ENCODE measurements at regions of chr9 and their contacts with region 1.

Region 1: DNA sequence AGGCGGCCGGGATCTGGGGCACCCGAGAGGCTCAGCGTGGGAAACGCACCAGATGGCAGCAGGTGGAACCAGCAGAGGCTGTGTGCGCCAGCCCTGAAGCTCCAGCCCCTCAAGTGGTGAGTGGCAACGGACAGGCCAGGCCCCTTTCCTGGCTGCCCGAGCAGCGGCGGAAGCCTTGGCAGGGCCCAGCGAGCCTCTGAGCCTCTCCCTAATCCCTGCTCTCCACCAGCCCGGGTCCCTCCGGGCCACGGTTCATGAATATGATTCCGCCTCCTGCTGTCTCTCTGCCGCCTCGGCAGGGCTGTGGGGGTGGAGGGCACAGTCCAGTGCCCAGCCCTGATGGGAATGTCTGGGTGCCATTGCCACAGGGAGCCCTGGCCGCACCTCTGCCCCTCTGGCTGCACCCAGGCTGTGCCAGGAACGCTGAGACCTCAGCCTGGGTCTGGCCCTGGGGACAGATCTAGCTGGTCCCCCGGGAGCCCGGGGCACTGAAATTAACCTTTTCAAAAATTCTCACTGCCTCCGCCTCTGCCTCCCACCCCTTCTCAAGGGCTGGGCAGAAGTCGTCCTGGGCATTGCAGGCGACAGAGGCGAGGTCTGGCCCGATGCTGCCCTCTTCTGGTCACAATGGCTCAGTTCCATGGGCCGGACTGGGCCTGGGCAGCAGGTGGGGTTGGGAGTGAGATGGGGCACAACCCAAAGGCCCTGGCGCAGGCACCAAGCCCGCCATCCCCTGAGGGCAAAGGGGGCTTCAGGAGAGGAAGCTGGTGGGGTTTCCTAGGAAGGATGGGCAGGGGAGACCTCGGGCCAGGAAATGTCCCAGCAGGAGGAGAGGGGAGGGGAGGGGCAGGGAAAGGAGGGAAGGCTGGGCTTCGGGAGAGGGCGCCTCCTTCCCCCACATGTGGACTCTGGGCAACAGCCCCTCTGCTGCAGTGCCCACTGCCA is 20.3 kb downstream of the CCDC187 start:
- DNase-seq: peak; percentile 88
- ATAC-seq: peak; percentile 94

Region 2: DNA sequence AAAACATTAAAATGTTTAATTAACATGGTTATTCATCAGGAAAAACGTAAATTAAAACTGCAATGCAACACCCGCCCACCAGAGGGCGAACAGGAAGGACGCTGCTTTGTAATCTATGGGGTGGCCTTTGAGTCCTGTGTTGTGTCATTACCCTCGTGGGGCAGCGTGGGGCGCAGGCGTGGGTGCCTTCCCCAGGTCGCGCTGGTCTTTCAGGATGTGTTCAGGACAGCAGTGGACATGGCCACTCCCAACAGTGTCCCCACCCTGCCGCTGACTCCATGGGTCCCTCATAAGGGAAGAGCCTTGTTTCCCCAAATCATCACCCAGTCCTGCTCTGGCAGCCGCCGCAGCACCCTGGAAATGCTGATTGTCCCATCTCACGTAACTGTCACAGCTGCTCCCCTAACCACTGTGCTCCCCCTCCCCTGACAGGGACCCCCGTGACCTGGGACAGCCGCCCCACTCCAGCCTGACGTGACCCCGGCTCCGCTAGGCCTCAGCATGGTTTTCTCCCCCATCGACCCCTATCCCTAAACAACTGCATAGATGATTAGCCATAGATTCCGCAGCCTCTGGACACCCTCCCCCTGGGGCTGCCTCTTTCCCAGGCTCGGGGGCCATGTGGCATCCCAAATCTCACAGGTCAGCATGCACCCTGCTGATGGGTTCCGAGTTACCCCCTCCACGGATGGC is 680.6 kb before region 1 on chr9:
- intact Hi-C with region 1: loop called (anchors 10 kb)
- DNase-seq: peak; percentile 26
- ATAC-seq: no peak

Region 3: DNA sequence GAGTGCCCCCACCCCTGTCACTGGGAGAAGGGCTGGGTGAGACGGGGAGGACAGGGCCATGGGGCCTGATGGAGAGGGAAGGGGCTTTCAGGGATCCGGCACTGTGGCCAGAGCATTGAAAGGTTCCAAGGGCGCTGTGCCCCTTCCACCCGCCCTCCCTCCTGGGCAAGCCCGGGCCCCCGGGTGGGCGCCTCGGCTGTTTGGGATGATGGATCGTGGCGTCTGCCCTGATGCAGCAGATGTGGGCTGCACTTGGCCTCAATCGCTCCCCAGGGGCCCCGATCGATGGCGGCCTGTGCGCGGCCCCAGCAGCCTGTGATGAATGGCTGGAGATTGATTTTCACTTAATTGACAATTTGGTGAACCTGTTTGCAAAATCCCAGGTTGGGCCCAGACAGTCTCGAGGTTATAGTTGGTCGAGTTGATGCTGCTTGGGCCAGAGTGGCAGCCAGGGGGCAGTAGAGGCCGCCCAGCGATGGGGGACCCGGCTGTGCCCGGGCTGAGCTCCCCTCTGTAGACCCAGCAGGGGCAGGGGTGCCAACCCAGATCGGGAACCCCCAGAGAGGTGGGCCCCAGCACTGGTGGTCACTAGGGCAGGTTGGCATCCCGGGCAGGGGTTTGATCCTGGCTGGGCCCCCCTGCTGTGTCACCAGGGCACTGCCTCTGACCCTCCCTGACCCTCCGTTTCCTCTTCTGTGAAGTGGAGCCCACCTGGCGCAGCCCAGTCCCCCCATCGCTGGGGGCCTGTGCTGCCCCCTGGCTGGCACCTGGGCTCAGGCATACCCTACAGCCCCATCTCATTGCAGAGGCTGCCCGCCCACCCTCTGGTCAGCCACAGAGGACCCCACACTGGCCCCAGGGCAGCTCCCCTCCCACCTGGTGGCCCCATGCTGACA is 113.3 kb before region 1 on chr9:
- intact Hi-C with region 1: loop called (anchors 1 kb)
- DNase-seq: peak; percentile 53
- ATAC-seq: no peak

Region 4: DNA sequence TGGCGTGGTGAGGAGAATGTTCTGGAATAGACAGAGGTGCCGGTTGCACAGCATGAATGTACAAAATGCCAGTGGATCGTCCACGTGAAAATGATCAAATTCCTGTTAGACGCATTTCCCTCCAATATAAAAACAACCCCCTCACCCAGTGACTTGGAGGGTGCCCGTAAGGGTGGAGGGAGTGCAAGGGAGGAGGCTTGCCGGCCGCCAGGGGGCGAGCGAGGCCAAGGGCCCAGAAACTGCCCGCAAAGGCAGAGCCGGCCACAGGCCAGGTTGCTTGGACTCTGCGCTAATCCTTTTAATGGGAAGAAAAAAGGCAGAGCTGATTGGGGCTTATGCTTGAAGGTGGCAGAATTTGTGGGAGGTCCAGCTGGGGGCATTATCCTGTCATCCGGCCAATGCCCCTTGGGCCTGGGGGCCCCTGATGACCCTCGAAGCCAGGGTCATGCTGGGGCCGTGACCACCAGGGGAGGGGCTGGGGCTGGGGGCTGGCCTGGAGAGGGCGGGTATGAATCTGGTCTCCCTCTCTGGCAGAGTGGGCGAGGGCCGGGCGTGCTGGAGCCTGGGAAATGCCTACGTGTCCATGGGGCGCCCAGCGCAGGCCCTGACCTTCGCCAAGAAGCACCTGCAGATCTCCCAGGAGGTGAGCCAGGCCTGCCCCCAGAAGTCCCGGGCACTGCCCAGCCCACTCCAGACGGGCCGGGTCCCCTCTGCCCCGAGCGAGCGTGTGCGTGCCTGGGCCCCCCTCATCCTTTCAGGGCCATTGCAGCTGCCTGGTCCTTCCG is 55.8 kb after region 1 on chr9:
- intact Hi-C with region 1: no loop called
- DNase-seq: peak; percentile 90
- ATAC-seq: no peak

Region 5: DNA sequence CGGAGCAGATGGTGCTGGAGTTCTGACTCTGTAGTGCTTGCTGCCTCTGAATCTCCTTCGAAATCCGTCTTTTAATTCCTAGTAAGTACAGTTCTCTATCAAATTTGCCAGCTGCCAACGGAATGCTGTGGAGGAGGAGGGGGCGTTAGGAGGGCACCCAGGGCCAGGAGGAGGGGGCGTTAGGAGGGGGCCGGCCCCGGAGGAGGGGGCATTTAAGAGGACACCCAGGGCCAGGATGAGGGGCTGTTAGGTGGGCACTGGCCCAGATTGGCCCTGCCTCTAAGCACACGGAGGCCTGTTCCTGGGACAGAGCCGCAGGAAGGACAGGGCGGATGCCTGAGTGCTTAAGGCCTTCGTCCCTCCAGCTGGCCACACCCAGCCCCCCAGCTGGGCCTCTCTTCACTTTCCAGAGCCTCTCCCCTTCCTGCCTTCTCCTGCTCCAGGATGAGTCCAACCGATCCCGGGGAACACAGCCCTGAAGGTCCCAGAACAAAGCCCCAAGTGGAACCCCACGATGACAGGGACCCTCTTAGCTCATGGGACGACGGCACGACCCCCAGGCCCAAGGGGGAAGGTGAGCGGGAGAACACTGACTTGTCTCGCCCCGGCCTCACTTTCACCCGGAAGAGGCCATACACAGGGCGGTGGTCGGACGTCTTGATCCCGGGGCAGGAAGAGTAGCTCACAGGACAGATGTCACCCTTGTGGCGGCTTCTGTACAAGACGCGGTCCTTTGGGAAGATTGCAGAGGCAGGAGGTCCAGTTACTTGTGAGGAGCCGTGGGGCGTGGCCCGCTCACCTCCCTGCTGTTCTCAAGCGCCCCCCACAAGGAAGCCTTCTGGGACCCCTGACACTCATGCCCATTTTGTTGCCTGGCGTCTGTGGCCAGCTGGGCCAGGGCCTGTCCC is 146.4 kb after region 1 on chr9:
- intact Hi-C with region 1: no loop called
- DNase-seq: peak; percentile 44
- ATAC-seq: peak; percentile 21

Measured in Right ventricle myocardium inferior (tissue), 1 donor.